ENCODE measurements at regions of chr2 and their contacts with region 1.

Region 1: GRCh38 chr2:42974721-42975717 is 182.6 kb upstream of the HAAO start:
- DNase-seq: peak; percentile 35 to 85 (median 73)
- H3K4me3 ChIP-seq: peak overlapping the region in 58 of 59 donors; percentile 12 to 67 (median 49)
- H3K27ac ChIP-seq: peak overlapping the region in 46 of 59 donors; percentile 7 to 90 (median 66)
- H3K27me3 ChIP-seq: no peaks in the 10 kb centered on the region
- CTCF ChIP-seq: peak; percentile 63 to 97 (median 89)

Region 2: GRCh38 chr2:43024515-43025011 is 49.5 kb after region 1 on chr2:
- intact Hi-C with region 1: loop called (anchors 1 to 2 kb)
- DNase-seq: peak in 8 of 10 donors; percentile 47 to 78 (median 69)
- H3K4me3 ChIP-seq: no peak overlapping the region
- H3K27ac ChIP-seq: peak overlapping the region in 51 of 59 donors; percentile 0 to 93 (median 70)
- H3K27me3 ChIP-seq: no peaks in the 10 kb centered on the region
- CTCF ChIP-seq: peak; percentile 56 to 96 (median 83)

Region 3: GRCh38 chr2:43105586-43106558 is 130.9 kb after region 1 on chr2:
- intact Hi-C with region 1: no loop called
- DNase-seq: no peak
- H3K4me3 ChIP-seq: no peak overlapping the region
- H3K27ac ChIP-seq: peak overlapping the region in 51 of 59 donors; percentile 3 to 85 (median 64)
- H3K27me3 ChIP-seq: no peaks in the 10 kb centered on the region
- CTCF ChIP-seq: peak in 1 of 56 donors; percentile 16

Region 4: DNA sequence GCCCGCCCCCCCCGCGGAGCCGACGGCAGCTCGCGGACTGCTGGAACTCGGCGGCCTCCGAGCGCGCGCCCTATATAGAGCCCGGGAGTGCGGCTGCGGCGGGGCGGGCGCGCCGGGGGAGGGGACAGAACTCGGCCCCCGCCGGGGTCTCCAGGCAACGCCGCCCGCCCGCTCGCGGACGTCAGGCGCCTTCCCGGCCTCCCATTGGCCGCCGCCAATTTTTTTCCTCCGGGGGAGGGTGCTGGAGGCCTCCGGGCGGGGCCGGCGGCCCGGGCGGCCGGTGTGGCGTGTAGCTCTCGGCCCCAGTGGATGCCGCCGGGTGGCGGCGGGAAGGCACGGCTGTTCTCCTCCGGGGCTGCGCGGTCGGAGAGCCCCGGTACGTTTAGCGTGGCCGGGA is 251.5 kb after region 1 on chr2 and contains the start of gene ZFP36L2:
- intact Hi-C with region 1: loop called (anchors 1 to 2 kb)
- DNase-seq: peak; percentile 71 to 98 (median 94)
- H3K4me3 ChIP-seq: peak within 1 kb of the TSS; percentile 51 to 93 (median 79)
- H3K27ac ChIP-seq: peak within 1 kb of the TSS; percentile 89 to 100 (median 98)
- H3K27me3 ChIP-seq: peaks cover 0 to 19% (median 0%) of the 10 kb centered on the region in 45 donors
- CTCF ChIP-seq: peak in 8 of 56 donors; percentile 4 to 26 (median 18)
- total RNA-seq, gene ZFP36L2: 13.0 to 86.0 (median 32.4) TPM

Region 5: DNA sequence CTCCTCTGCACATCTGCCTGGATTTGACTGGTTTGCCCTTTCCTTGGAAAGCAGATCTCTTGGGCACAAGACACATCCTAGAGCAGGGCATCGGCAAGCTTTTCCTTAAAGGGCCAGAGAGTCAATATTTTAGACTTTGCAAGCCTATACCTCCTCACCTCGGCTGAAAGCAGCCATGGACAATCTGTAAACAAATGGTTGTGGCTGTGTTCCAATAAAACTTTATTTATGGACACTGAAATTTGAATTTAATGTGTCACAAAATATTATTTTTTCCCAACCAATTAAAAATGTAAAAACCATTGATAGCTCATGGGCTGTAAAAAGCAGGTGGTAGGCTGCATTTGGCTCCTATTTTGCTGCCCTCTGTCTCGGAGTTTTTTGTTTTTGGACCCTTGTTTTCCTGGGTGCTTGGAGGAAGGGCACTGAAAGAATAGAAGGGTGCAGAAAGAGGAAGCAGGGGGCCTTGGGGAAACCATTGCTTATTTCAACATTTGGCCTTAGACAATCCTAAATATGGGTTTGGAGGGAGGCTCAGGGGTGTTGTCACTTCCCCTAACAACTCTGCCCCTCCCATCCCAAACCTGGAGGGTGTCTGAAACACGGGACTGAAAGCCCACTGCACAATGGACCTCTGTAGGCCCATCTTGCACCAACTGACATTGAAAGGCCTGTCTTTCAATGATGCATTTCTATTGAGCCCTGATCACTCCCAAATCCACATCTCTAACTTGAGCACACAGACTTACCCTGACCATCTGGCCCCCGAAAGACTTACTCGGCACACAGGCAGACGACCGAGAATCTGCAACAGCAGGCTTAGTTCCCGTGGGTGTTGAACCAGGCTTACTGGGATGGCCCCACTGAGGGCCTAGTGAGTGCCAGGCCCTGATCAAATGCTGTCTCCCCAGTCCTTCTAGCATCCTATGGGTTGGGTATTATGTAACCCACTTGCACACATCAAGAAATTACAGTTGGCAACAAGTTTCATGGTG is 258.5 kb after region 1 on chr2:
- intact Hi-C with region 1: loop called (anchors 1 to 2 kb)
- DNase-seq: no peak
- H3K4me3 ChIP-seq: no peak overlapping the region
- H3K27ac ChIP-seq: peak overlapping the region in 10 of 59 donors; percentile 5 to 50 (median 22)
- H3K27me3 ChIP-seq: no peaks in the 10 kb centered on the region
- CTCF ChIP-seq: no peak